Mucosa of descending colon (tissue), 3 donors: ENCODE measurements at regions of chr6 and their contacts with region 1.

Region 1: GRCh38 chr6:160930547-160931377 is 60.8 kb upstream of the MAP3K4 start:
- DNase-seq: peak; percentile 61 to 79 (median 70)
- ATAC-seq: peak; percentile 92
- H3K4me3 ChIP-seq: no peak overlapping the region
- H3K4me1 ChIP-seq: peaks cover 5% of the 10 kb centered on the region
- CTCF ChIP-seq: peak; percentile 59

Region 2: GRCh38 chr6:160750276-160750689 is 180.5 kb before region 1 on chr6:
- intact Hi-C with region 1: no loop called
- DNase-seq: no peak
- ATAC-seq: no peak
- H3K4me3 ChIP-seq: no peak overlapping the region
- H3K4me1 ChIP-seq: no peaks in the 10 kb centered on the region
- CTCF ChIP-seq: no peak

Region 3: GRCh38 chr6:160986851-160987250 is 56.1 kb after region 1 on chr6:
- intact Hi-C with region 1: loop called in 1 of 2 experiments (anchors 10 kb)
- DNase-seq: no peak
- ATAC-seq: no peak
- H3K4me3 ChIP-seq: no peak overlapping the region
- H3K4me1 ChIP-seq: peaks cover 4% of the 10 kb centered on the region
- CTCF ChIP-seq: no peak

Region 4: DNA sequence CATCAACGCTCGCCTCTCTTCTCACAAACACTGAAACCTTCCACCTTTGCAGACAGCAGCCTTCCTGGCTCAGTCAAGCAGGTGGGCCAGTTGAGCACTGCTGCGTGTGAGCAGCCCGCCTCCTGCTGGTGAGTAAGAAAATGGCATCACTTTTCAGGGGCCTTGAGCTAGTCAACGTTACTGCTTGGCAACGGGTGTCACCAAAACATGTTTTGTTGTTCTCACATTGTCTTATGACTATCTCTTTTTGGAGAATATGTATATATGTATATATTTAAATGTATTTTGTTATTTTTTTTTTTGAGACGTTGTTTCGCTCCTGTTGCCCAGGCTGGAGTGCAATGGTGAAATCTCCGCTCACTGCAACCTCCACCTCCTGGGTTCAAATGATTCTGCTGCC is 440.1 kb after region 1 on chr6:
- intact Hi-C with region 1: loop called (anchors 5 kb)
- DNase-seq: peak in 2 of 3 donors; percentile 60 to 68
- ATAC-seq: peak; percentile 60
- H3K4me3 ChIP-seq: no peak overlapping the region
- H3K4me1 ChIP-seq: peaks cover 4% of the 10 kb centered on the region
- CTCF ChIP-seq: peak; percentile 78